Heart right ventricle (tissue), 16 donors: ENCODE measurements at regions of chr10 and their contacts with region 1.

Region 1: DNA sequence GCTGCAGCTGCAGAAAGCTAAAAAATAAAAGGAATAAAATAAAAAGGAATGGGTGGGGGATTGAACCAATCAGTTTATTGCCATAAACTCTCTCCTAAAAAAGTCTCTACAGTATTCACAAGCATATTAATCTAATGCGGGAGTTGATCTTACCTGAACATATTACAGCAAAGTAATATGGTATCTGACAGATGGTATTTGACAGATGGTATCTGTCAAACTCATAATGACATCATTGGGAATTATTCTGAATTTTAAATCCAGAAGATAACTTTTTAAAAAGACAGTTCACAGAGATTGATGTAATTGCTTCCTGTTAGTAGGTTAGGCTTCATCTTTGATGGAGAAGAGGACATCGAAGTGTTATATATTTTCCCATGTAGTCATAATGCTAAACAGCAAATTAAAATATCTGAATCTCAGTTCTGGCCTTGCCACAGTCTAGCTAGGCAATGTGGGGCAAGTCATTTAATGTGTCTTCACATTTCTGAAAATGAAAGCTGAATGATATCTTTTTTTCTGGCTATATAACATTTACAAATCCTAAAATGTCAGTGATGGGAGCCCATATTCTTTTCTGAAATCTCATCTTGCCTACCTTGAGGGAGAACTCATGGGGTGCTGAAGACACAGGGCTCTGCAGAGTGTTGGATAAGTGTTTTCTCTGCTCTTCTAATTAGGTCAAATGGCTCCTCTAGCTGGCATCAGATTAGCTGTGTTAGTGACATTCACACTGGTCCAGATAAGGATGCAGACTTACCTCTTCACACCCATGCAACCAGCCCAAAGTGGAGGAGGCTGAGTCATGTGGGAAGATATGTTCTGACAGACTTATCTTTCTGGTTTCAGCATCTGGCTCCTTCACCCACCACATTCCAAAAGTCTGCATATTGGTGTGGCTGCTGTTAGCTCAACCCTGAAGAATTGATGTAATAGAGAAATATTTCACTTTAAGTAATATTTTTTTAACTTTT is 2.1 kb upstream of the LIPM start:
- DNase-seq: no peak
- ATAC-seq: no peak
- H3K4me3 ChIP-seq: no peak overlapping the region
- H3K27ac ChIP-seq: no peak overlapping the region
- H3K4me1 ChIP-seq: no peaks in the 10 kb centered on the region
- H3K27me3 ChIP-seq: peaks cover 0 to 8% (median 0%) of the 10 kb centered on the region in 7 donors
- CTCF ChIP-seq: no peak

Region 2: DNA sequence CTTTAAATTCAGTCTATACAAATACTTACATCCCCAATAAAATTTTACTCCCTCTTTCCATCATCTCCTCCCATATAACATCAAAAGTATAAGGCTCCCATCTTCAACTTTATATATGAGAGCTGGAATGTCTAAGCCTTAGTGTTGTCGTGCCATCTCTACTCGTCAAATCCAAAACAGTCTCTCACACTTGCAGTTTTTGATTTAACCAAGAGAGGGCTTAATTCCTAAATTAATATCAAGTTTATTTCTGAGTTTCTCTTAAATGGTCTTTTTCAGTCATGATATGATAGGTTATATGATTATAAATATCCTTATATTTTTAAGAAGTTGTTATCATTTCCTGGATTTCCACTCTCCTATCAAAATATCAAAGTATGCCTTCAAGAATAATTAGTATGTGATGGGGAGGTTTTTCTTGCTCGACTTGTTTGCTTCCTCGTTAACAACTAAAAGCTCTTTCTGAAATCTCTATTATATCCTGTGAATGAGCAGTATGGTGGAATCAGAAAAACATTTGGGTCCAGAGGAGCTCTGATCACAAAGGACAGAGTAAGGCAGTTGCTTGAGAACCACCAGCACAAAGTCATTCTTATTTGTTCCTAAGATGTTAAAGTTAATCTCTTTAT is 106.9 kb before region 1 on chr10:
- intact Hi-C with region 1: loop called in 5 of 10 experiments (anchors 5 to 10 kb)
- DNase-seq: no peak
- ATAC-seq: no peak
- H3K4me3 ChIP-seq: no peak overlapping the region
- H3K27ac ChIP-seq: no peak overlapping the region
- H3K4me1 ChIP-seq: no peaks in the 10 kb centered on the region
- H3K27me3 ChIP-seq: peaks cover 0 to 12% (median 0%) of the 10 kb centered on the region in 7 donors
- CTCF ChIP-seq: peak in 2 of 9 donors; percentile 16 to 27

Region 3: DNA sequence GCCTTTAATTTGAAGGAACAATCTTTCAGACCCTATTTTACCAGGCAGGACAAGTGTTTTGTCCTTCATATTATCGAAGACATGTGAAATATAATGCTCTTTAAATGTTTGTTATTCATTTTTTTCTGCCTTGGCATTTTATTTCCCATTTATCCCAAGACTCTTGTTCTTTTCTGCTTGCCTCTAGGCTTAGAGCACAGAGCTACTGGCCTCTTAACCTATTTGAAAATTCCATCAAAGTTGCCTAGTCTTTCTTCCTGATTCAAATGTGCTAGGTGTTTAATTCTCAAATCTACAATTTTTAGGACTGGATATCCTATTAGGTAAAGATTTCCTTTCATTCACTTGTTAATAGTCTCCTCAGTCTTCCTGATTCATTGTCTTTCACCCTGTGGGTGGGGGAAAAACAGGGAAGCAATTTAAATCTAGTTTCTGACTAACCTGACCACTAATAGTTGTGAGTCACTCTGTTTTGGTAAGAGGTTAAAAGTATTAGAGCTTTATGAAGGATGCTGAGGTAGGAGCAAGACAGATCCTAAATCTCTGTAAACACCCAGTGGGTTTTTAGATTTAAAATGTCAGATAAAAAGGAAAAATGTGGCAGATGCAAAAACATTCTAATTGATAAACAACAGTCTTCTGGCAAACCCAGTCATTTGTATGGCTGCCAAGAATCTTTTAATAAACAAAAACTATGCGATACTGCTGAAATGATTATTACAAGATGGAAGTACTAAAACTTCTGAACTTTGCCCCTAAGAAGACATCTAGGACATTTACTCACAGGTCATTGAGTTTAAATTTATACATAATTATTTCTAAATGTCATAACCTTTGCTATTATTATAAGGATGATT is 92.8 kb before region 1 on chr10:
- intact Hi-C with region 1: loop called in 1 of 10 experiments (anchors 10 kb)
- DNase-seq: no peak
- ATAC-seq: no peak
- H3K4me3 ChIP-seq: no peak overlapping the region
- H3K27ac ChIP-seq: no peak overlapping the region
- H3K4me1 ChIP-seq: peaks cover 0 to 3% (median 0%) of the 10 kb centered on the region in 9 donors
- H3K27me3 ChIP-seq: no peaks in the 10 kb centered on the region
- CTCF ChIP-seq: no peak

Region 4: GRCh38 chr10:88725798-88726197 is 74.6 kb before region 1 on chr10:
- intact Hi-C with region 1: no loop called
- DNase-seq: no peak
- ATAC-seq: no peak
- H3K4me3 ChIP-seq: no peak overlapping the region
- H3K27ac ChIP-seq: no peak overlapping the region
- H3K4me1 ChIP-seq: no peaks in the 10 kb centered on the region
- H3K27me3 ChIP-seq: peaks cover 0 to 30% (median 11%) of the 10 kb centered on the region in 7 donors
- CTCF ChIP-seq: no peak

Region 5: GRCh38 chr10:88763441-88763840 is 37.0 kb before region 1 on chr10:
- intact Hi-C with region 1: no loop called
- DNase-seq: no peak
- ATAC-seq: no peak
- H3K4me3 ChIP-seq: no peak overlapping the region
- H3K27ac ChIP-seq: no peak overlapping the region
- H3K4me1 ChIP-seq: peaks cover 0 to 9% (median 0%) of the 10 kb centered on the region in 9 donors
- H3K27me3 ChIP-seq: no peaks in the 10 kb centered on the region
- CTCF ChIP-seq: no peak

Region 6: DNA sequence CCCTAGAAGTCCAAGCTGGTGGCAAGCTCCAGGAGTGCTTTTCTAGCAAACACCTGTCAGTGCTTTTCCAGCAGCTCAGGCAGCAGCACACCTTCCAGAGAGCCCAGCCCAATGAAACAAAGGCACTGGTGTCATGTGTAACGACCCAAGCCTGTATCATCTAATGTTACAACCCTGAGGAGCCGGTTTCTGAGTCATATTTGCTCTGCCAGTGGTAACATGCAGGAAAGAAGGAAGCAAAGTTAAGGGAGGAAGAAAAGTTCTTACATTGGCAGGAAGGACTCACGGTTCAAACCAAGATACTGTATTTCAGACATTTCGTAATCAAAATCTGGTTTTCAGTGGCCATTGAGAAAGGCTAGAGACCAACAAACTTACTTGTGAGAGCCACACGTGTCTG is 51.3 kb after region 1 on chr10 and contains the start of gene ANKRD22:
- intact Hi-C with region 1: no loop called
- DNase-seq: no peak
- ATAC-seq: peak in 6 of 8 donors; percentile 19 to 76 (median 41)
- H3K4me3 ChIP-seq: peak within 1 kb of the TSS in 1 of 10 donors; percentile 23
- H3K27ac ChIP-seq: peak within 1 kb of the TSS in 3 of 10 donors; percentile 24 to 37 (median 33)
- H3K4me1 ChIP-seq: peaks cover 0 to 70% (median 5%) of the 10 kb centered on the region in 9 donors
- H3K27me3 ChIP-seq: no peaks in the 10 kb centered on the region
- CTCF ChIP-seq: no peak
- total RNA-seq, gene ANKRD22: 0.14 to 4.9 (median 0.17) TPM in 3 of 10 donors, not detected in the others

Region 7: DNA sequence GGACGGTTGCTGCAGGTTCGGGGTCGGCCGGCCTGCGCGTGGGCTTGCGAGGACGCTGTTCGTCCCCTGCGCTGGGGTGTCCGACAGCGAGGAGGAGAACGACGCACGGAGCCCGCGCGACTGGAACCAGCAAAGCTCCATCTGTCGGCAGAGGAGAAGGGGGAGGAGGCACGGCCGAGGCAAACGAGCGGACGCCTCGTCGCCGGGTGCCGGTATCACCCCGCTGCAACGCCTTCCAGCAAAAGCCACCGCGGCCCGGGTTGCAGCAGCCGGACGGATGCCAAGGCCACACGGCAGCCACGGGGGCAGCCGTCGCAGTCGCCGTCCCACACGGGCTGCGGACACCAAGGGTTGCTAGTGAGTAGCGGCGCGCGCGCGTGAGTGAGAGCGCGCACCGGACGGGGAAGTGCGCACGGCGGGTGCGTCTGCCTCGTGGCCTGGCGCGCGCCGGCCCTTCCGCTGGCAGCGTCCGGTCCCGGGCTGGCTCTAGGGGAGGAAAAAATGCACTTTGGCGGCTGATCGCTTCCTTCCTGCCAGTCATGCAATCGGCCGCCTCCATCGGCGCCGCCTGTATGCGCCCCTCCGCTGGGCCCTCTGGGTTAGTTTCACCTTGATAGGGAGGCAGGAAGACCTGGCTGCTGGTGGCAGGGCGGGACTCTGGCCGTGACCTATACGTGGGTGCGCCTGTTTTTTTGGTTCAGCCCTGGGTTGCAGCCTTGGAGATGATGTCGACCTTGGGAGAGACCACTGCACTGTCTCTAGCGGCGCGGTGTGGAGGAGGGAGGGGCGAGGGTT is 80.0 kb after region 1 on chr10:
- intact Hi-C with region 1: no loop called
- DNase-seq: peak; percentile 84 to 85
- ATAC-seq: peak; percentile 93 to 97 (median 96)
- H3K4me3 ChIP-seq: peak overlapping the region; percentile 60 to 87 (median 79)
- H3K27ac ChIP-seq: peak overlapping the region; percentile 85 to 94 (median 90)
- H3K4me1 ChIP-seq: peaks cover 0 to 59% (median 29%) of the 10 kb centered on the region in 9 donors
- H3K27me3 ChIP-seq: peaks cover 0 to 6% (median 0%) of the 10 kb centered on the region in 7 donors
- CTCF ChIP-seq: peak in 7 of 9 donors; percentile 10 to 54 (median 34)